ENCODE measurements at regions of chr19 and their contacts with region 1.

Region 1: DNA sequence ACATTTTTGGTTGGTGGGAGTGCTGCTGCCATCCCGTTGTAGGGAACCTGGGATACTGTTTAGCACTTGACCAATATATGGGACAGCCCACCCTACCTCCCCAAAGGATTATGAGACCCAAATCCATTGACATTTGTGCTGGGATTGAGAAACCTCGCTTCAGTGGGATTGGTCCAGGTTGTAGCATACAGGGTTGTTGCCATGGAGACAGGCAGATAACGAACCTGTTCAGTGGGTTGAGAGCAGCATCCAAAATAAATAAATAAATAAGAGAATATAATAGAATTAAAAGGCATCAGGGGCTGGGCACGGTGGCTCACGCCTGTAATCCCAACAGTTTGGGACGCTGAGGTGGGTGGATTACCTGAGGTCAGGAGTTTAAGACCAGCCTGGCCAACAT is 11.3 kb downstream of the MUC16 start:
- DNase-seq: no peak
- H3K4me3 ChIP-seq: no peak overlapping the region
- H3K27ac ChIP-seq: no peak overlapping the region
- H3K4me1 ChIP-seq: peaks cover 0 to 5% (median 0%) of the 10 kb centered on the region in 4 experiments; a peak in 4 of 7 replicates
- H3K27me3 ChIP-seq: no peaks in the 10 kb centered on the region
- CTCF ChIP-seq: no peak
- EP300 ChIP-seq: no peak
- POLR2A ChIP-seq: no peak
- RAD21 ChIP-seq: no peak

Region 2: GRCh38 chr19:8988204-8988603 is 10.7 kb before region 1 on chr19:
- CTCF ChIA-PET with region 1: interaction called, 18 read pairs
- POLR2A ChIA-PET with region 1: no interaction called
- DNase-seq: peak in 1 of 2 experiments; percentile 52
- H3K4me3 ChIP-seq: no peak overlapping the region
- H3K27ac ChIP-seq: no peak overlapping the region
- H3K4me1 ChIP-seq: no peaks in the 10 kb centered on the region
- H3K27me3 ChIP-seq: no peaks in the 10 kb centered on the region
- CTCF ChIP-seq: peak; percentile 5 to 49 (median 28); a peak in 3 of 4 replicates
- EP300 ChIP-seq: no peak
- POLR2A ChIP-seq: no peak
- RAD21 ChIP-seq: peak; percentile 46 to 55

Region 3: GRCh38 chr19:9018163-9018875 is 19.4 kb after region 1 on chr19:
- CTCF ChIA-PET with region 1: no interaction called
- POLR2A ChIA-PET with region 1: no interaction called
- DNase-seq: no peak
- H3K4me3 ChIP-seq: no peak overlapping the region
- H3K27ac ChIP-seq: no peak overlapping the region
- H3K4me1 ChIP-seq: no peaks in the 10 kb centered on the region
- H3K27me3 ChIP-seq: no peaks in the 10 kb centered on the region
- CTCF ChIP-seq: no peak
- EP300 ChIP-seq: no peak
- POLR2A ChIP-seq: no peak
- RAD21 ChIP-seq: no peak

Region 4: GRCh38 chr19:9128171-9128570 is 129.2 kb after region 1 on chr19:
- CTCF ChIA-PET with region 1: no interaction called
- POLR2A ChIA-PET with region 1: no interaction called
- DNase-seq: no peak
- H3K4me3 ChIP-seq: no peak overlapping the region
- H3K27ac ChIP-seq: no peak overlapping the region
- H3K4me1 ChIP-seq: no peaks in the 10 kb centered on the region
- H3K27me3 ChIP-seq: no peaks in the 10 kb centered on the region
- CTCF ChIP-seq: no peak
- EP300 ChIP-seq: no peak
- POLR2A ChIP-seq: no peak
- RAD21 ChIP-seq: no peak